ENCODE measurements at regions of chr7 and their contacts with region 1.

Region 1: GRCh38 chr7:23181684-23182553 is at the start of gene NUP42:
- DNase-seq: peak; percentile 99
- H3K4me3 Mint-ChIP-seq: peak within 1 kb of the TSS; percentile 87
- H3K27ac Mint-ChIP-seq: peak within 1 kb of the TSS; percentile 95
- H3K4me1 Mint-ChIP-seq: peaks cover 31% of the 10 kb centered on the region
- H3K27me3 Mint-ChIP-seq: no peaks in the 10 kb centered on the region
- total RNA-seq, gene NUP42: 24.1 to 31.7 TPM

Region 2: DNA sequence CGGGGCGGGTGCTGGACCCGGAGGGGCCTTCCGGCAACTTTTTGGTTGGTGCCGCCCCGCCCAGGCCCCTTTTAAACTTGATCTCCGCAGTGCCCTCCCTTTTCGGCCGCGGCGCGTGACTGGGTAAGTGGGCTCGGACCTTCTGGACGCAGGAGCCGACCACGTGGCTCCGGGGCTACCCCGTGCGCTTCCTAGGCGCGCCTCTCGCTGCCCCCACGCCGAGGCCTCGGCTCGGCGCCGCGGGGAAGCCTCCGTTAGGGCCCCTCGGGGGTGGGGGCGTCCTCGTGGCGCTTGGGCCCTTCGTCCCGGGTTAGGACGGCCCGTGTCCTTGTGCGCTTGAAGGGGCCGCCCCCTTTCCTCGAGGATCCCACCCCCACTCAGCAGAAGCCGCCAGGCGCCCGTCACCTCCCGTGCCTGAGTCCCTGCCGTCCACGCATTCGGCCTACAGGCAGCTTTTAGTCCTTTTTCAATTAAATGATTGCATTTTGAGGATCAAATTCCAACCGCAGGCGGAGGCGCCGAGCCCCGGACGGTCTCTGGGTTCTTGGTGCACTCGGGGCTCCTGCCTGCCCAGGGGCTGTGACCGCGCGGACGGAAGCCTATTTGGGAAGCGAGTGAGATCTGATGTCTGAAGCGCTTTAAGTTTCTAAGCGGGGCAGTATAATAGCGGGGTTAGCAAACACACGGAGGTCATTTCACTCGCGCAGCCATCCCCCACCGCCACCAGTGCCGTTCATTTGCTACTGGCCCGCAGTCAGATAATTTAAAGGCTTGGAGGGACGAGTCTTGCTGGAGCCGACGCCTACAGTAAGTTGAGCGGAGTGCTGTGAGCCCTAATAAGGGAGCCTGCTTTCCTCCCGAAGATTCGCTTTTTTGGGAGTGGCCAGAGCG is 327.5 kb before region 1 on chr7:
- CTCF ChIA-PET with region 1: no interaction called
- POLR2A ChIA-PET with region 1: no interaction called
- intact Hi-C with region 1: loop called (anchors 10 kb)
- DNase-seq: no peak
- H3K4me3 Mint-ChIP-seq: peak overlapping the region; percentile 93
- H3K27ac Mint-ChIP-seq: peak overlapping the region; percentile 93
- H3K4me1 Mint-ChIP-seq: peaks cover 34% of the 10 kb centered on the region
- H3K27me3 Mint-ChIP-seq: peaks cover 2% of the 10 kb centered on the region

Region 3: GRCh38 chr7:23093546-23093945 is 88.4 kb before region 1 on chr7:
- CTCF ChIA-PET with region 1: no interaction called
- POLR2A ChIA-PET with region 1: no interaction called
- intact Hi-C with region 1: loop called (anchors 5 kb)
- DNase-seq: no peak
- H3K4me3 Mint-ChIP-seq: no peak overlapping the region
- H3K27ac Mint-ChIP-seq: no peak overlapping the region
- H3K4me1 Mint-ChIP-seq: no peaks in the 10 kb centered on the region
- H3K27me3 Mint-ChIP-seq: peaks cover 3% of the 10 kb centered on the region

Region 4: DNA sequence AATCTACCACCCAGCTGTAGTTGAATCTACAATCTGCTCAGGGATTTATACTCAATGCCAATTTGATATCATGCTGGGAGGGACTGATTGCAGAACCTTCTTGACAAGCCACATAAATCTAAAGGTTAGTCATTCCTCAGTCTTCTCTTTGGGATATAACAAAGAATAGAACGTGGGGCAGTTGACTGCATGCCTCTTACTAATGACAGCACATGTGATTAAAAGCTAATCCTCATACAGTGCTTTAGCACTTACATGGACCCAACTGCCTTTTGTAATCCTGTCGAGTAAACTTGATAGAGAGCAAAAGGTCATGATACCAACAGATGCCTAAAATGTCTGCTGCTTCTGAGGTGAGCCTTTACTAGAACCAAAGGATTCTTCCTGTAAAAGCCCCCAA is 64.1 kb before region 1 on chr7:
- CTCF ChIA-PET with region 1: no interaction called
- POLR2A ChIA-PET with region 1: no interaction called
- intact Hi-C with region 1: no loop called
- DNase-seq: no peak
- H3K4me3 Mint-ChIP-seq: no peak overlapping the region
- H3K27ac Mint-ChIP-seq: no peak overlapping the region
- H3K4me1 Mint-ChIP-seq: peaks cover 7% of the 10 kb centered on the region
- H3K27me3 Mint-ChIP-seq: no peaks in the 10 kb centered on the region

Region 5: DNA sequence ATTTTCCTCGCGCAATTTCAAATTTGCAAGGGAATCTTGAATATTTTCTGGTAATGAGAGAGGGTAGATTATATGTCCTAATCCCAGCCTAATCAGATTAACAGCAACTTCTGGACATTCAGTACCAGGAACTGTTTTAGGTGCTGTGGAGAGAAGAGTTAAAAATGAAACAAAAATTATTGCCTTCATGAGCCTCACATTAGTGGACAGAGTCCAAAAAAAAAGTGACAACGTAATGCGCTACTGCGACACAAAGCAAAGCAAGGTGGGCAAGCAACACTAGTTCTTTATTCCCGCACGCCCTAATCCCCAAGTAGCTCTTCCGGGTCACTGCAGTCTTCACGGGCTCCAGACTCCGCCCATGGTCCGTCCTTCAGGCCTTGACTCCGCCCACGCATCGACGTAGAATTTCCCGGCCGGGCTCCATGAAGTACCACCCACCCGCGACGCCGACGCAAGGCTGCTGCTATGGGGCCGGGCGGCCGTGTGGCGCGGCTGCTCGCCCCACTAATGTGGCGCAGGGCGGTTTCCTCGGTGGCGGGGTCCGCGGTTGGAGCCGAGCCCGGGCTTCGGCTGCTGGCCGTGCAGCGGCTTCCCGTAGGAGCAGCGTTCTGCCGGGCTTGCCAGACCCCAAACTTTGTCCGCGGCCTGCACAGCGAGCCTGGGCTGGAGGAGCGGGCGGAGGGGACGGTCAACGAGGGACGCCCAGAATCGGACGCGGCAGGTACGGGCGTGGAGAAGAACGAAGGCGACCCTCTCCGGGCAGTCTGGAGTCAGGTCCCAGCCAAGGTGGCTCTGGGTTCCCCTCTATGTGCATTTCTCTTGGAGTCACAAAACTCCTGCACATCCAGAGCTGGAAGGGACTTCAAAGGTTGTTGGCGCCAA is 117.2 kb after region 1 on chr7 and contains the start of gene MALSU1:
- CTCF ChIA-PET with region 1: no interaction called
- POLR2A ChIA-PET with region 1: no interaction called
- intact Hi-C with region 1: loop called (anchors 1 kb)
- DNase-seq: peak; percentile 98
- H3K4me3 Mint-ChIP-seq: peak within 1 kb of the TSS; percentile 96
- H3K27ac Mint-ChIP-seq: peak within 1 kb of the TSS; percentile 97
- H3K4me1 Mint-ChIP-seq: peaks cover 36% of the 10 kb centered on the region
- H3K27me3 Mint-ChIP-seq: peaks cover 3% of the 10 kb centered on the region
- total RNA-seq, gene MALSU1: 100 to 101 TPM

Region 6: DNA sequence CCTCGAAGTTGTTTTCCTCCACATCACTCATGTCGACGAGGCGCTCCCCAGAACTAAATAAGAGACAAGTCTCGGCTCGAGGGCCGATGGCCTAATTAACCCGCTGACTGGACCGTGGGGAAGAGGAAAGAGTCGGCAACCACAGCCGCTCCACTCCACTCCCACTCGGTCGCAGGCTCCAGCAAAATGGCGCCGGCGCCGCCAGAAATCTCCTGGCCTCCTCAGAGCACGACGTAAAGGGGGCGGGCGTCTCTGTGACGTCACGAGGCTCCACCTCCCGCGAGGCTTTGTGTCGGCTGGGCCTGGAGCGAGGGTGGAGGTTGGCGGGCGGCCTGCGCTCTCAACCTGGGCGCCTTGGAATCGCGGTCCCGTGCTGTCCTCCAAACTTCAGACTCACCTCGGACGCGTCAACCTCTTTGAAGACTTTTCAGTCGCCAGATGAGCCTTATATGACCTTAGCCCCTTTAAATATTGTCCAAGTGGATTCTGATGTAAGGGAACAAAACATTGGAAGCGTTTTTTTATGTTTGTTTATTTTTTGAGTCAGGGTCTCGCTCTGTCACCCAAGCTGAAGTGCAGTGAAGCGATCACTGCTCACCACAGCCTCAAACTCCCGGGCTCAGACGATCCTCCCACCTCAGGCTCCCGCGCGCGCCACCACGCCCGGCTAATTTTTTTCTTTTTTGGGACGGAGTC is 350.0 kb after region 1 on chr7 and contains the start of gene TRA2A:
- CTCF ChIA-PET with region 1: no interaction called
- POLR2A ChIA-PET with region 1: no interaction called
- intact Hi-C with region 1: loop called (anchors 2 kb)
- DNase-seq: peak; percentile 98
- H3K4me3 Mint-ChIP-seq: peak within 1 kb of the TSS; percentile 100
- H3K27ac Mint-ChIP-seq: peak within 1 kb of the TSS; percentile 100
- H3K4me1 Mint-ChIP-seq: peaks cover 38% of the 10 kb centered on the region
- H3K27me3 Mint-ChIP-seq: no peaks in the 10 kb centered on the region
- total RNA-seq, gene TRA2A: 75.4 to 77.8 TPM